Activated CD4-positive, alpha-beta T cell treated with anti-CD3 and anti-CD28 coated beads, Interleukin-2, amount 10 ng/mL, durations not matched to agents 7 days and 5 days (primary cell): ENCODE measurements at regions of chr7 and their contacts with region 1.

Region 1: DNA sequence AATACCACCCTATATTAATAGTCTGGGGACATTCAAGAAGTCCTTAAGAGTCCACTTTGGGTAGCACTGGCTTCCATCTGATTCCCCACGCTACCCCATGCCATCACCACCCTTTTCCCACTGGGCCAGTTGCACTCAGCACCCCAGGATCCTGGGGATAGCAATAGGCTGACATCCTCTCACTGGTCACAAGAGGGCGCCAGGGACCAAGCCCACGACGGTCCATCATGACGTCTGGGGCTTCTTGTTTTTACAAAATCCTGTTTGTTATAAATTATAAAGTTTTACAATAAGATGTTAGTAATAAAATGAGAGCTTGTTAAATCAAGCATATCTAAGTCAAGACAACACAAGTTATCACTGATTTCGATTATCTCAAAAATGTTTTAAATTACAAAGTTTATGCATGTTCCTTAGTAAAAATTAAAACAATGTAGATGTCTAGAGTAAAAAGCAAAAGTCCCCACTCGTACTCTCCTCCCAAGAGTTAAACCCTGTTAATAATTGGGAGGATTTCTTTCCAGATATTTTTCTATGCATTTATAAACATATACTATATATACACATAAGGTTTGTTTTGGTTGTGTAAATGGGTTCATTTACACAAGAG is 15.4 kb downstream of the GPNMB start:
- DNase-seq: peak; percentile 68
- H3K4me3 Mint-ChIP-seq: no peak overlapping the region
- H3K27ac Mint-ChIP-seq: no peak overlapping the region
- H3K4me1 Mint-ChIP-seq: no peaks in the 10 kb centered on the region
- H3K27me3 Mint-ChIP-seq: peaks cover 15% of the 10 kb centered on the region

Region 2: DNA sequence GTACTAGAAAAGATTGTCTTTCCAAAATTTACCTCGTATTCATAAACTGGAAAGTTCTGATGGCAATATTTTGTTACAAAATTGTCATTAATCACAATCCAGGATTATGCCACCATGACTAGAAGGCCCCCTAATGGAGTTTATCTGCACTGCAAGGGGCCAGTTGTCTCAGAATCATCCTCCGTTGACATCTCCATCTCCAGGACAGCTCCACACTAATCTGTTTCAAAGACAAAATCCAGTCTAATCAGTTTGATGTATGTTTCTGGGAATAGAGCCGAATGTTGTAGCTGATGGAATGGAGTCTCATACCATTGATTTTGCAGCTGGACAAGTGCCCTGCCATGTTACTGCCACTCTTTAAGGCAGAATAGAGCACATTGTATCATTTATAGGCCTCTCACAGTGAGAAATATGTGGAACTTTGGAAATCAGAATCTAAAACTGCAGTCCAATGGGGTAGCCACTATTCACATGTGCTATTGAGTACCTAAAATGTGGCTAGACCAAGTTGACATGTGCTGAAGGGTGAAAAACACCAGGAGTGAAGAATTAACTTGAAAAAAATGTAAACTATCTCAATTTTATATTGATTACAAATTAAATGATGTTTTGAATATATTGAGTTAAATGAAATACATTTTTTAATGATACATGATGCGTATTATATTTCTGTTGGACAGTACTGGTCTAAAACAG is 401.0 kb before region 1 on chr7:
- CTCF ChIA-PET with region 1: no interaction called
- POLR2A ChIA-PET with region 1: no interaction called
- DNase-seq: peak; percentile 16
- H3K4me3 Mint-ChIP-seq: no peak overlapping the region
- H3K27ac Mint-ChIP-seq: no peak overlapping the region
- H3K4me1 Mint-ChIP-seq: peaks cover 37% of the 10 kb centered on the region
- H3K27me3 Mint-ChIP-seq: no peaks in the 10 kb centered on the region

Region 3: DNA sequence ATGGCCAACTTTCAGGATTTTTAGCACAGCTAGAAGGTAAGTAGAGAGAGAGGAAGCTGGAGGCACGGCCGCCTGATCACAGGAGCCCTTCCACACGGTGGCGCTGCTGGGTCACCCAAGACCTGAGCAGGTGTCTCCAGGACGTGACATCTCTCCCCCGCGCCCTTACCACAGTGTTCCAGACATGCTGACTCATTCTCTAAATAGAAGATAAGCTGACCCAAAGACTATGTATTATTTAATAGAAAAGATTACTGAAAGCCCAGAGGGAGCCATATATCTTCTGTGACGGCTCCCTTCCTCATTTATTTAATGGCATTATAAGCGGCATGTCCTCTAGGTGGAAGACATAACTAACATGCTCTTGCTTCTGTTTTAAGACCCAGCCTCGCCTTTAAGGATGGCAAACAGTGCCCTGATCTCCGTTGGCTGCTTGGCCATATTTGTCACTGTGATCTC is 11.2 kb after region 1 on chr7:
- CTCF ChIA-PET with region 1: interaction called, 12 read pairs
- POLR2A ChIA-PET with region 1: no interaction called
- DNase-seq: peak; percentile 91
- H3K4me3 Mint-ChIP-seq: peak overlapping the region; percentile 53
- H3K27ac Mint-ChIP-seq: no peak overlapping the region
- H3K4me1 Mint-ChIP-seq: peaks cover 13% of the 10 kb centered on the region
- H3K27me3 Mint-ChIP-seq: peaks cover 2% of the 10 kb centered on the region

Region 4: DNA sequence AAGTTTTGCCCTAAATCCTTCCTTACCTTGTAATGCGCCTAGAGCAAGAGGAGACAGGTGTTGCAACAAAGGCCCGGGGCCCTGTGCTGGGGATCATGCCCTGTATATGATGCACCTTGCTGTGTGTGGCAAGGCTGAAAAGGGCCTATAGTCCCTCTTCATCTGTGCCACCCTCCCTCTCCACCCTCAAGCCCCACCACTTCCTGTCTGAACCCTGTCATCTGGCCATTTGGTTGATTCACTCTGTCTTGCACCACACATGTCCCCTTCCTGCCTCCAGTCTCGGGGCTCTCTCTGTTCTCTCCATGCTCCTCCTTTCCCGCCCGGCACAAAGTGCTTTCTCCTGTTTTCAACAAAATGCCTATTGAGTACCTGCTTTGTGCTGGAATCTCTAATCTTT is 25.7 kb after region 1 on chr7:
- CTCF ChIA-PET with region 1: no interaction called
- POLR2A ChIA-PET with region 1: no interaction called
- DNase-seq: peak; percentile 23
- H3K4me3 Mint-ChIP-seq: no peak overlapping the region
- H3K27ac Mint-ChIP-seq: no peak overlapping the region
- H3K4me1 Mint-ChIP-seq: peaks cover 21% of the 10 kb centered on the region
- H3K27me3 Mint-ChIP-seq: no peaks in the 10 kb centered on the region